GM13977 (cell line): ENCODE measurements at regions of chr18 and their contacts with region 1.

Region 1: DNA sequence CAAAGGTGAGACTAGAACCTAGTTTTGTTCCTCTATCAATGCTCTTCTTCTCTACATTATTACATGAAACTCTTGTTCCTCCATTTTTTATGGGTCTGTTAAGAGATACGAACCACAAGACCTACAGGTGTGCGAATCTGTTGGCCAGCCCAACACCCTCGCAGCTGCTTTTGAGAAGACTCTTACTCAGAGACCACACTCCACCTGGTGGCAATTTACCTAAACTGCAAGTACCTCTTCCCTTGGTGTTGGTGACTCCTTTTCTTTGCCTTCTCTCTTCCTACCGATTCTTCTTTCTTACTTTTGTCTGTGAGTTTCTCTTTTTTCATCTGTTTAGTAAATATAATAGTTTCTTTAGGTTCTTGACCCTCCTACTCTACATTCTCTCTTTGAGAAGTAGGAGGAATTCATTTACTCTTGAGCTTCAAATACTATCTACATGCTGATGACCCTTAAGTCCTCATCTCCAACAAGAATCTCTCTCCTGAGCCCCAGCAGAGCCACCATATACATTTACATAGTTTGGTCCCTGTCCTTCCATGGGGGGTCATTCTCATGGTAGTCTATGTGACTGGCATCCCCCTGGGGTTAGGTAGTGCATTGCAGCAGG is 81.8 kb upstream of the GAREM1 start:
- DNase-seq: peak; percentile 77
- CTCF ChIP-seq: peak; percentile 71

Region 2: GRCh38 chr18:32167975-32168730 is 384.4 kb before region 1 on chr18:
- in situ Hi-C with region 1: loop called (anchors 10 kb)
- DNase-seq: no peak
- CTCF ChIP-seq: no peak